ENCODE measurements at regions of chr2 and their contacts with region 1.

Region 1: GRCh38 chr2:72993147-72993932 is 76.0 kb downstream of the EMX1 start:
- DNase-seq: no peak
- ATAC-seq: peak in 3 of 8 donors; percentile 37 to 60 (median 45)
- H3K4me3 ChIP-seq: no peak overlapping the region
- H3K27ac ChIP-seq: no peak overlapping the region
- H3K4me1 ChIP-seq: peaks cover 0 to 14% (median 8%) of the 10 kb centered on the region in 9 donors
- H3K27me3 ChIP-seq: no peaks in the 10 kb centered on the region
- CTCF ChIP-seq: peak; percentile 63 to 89 (median 84)

Region 2: DNA sequence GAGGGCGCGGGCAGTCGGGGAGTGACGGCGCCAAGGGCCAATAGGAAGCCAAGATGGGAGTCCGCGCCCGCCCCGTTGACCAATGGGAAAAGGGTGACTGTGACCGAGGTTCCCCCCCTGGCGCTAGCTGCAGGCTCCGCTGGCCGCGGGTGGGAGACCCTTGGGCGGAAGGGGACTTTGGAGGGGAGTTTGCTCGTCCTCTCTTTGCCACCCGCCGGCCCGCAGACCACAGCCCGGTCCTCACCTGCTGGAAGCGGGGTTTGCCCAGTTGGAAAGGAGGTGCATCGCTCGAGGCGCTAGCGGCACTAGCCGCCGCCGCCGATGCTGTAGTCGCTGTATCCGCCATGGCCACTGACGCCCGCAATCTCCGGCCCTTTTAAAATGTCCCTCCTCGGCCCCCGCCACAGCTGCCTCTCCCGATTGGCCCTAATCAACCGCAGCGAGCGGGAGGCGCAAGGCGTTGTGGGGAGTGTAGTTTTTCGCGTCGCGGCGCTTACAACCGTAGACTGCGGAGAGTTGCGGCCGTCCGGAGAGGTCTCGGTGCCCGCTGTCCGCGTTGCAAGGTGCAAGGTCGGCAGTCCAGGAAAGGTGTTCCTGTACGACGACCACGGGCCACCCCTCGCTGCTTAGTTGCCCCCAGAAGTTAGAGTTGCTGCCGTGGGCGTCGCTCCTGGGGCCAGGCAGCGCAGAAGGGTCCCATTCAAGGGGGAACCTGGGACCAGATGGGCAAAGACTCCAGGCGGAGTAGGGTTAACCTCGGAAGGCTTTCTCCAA is 78.2 kb after region 1 on chr2 and contains the start of gene SFXN5:
- intact Hi-C with region 1: loop called in 2 of 10 experiments (anchors 5 kb)
- DNase-seq: peak; percentile 99
- ATAC-seq: peak; percentile 95 to 98 (median 97)
- H3K4me3 ChIP-seq: peak within 1 kb of the TSS; percentile 69 to 98 (median 94)
- H3K27ac ChIP-seq: peak within 1 kb of the TSS; percentile 79 to 99 (median 93)
- H3K4me1 ChIP-seq: peaks cover 10 to 44% (median 25%) of the 10 kb centered on the region in 9 donors
- H3K27me3 ChIP-seq: no peaks in the 10 kb centered on the region
- CTCF ChIP-seq: peak in 7 of 9 donors; percentile 12 to 58 (median 35)
- total RNA-seq, gene SFXN5: 7.3 to 11.8 (median 10.0) TPM

Region 3: GRCh38 chr2:73085691-73086360 is 92.5 kb after region 1 on chr2:
- intact Hi-C with region 1: loop called in 1 of 10 experiments (anchors 5 kb)
- DNase-seq: peak; percentile 81 to 84
- ATAC-seq: peak; percentile 57 to 84 (median 66)
- H3K4me3 ChIP-seq: no peak overlapping the region
- H3K27ac ChIP-seq: no peak overlapping the region
- H3K4me1 ChIP-seq: peaks cover 0 to 54% (median 20%) of the 10 kb centered on the region in 9 donors
- H3K27me3 ChIP-seq: no peaks in the 10 kb centered on the region
- CTCF ChIP-seq: peak; percentile 82 to 98 (median 94)

Region 4: GRCh38 chr2:73156539-73157124 is 163.3 kb after region 1 on chr2:
- intact Hi-C with region 1: loop called in 9 of 10 experiments (anchors 2 to 5 kb)
- DNase-seq: peak; percentile 52 to 66
- ATAC-seq: peak; percentile 83 to 94 (median 88)
- H3K4me3 ChIP-seq: peak overlapping the region in 1 of 10 donors; percentile 14
- H3K27ac ChIP-seq: no peak overlapping the region
- H3K4me1 ChIP-seq: peaks cover 0 to 8% (median 4%) of the 10 kb centered on the region in 9 donors
- H3K27me3 ChIP-seq: peaks cover 0 to 27% (median 17%) of the 10 kb centered on the region in 7 donors
- CTCF ChIP-seq: peak; percentile 62 to 88 (median 81)

Region 5: DNA sequence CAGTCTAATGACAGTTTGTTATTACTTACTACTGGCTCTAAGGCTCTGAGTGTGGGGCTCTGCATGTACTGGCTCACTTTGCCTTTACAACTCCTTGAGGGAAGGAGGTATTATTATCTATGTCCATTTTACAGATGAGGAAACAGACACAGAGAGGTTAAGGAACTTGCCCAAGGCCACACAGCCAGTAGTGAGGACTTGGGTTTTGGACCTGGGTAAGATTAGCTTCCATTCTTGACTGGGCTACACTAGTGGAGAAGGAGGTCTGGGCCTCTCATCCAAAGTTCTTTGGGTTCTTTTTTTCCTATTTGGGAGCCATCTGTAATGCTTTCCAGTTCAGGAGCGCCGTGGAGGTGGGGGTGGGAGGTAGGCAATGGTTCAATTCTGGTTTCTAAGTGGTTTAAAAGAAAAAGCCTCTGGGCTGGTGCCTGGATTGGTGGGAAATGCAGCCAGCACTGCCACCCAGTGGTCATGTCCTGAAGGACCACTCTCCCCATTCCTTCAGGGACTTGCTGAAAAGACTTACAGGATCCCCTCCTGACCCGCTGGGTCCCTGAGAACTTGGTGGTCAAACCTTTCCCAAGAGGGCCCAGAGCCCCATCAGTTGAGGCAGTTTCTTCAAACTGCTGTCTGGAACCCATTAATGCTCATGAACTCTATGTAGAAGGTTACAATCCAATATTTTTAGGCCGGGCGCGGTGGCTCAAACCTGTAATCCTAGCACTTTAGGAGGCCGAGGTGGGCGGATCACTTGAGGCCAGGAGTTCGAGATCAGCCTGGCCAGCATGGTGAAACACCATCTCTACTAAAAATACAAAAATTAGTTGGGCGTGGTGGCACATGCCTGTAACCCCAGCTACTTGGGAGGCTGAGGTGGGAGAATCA is 170.4 kb after region 1 on chr2:
- intact Hi-C with region 1: loop called in 9 of 10 experiments (anchors 1 to 5 kb)
- DNase-seq: peak; percentile 60 to 66
- ATAC-seq: peak; percentile 58 to 90 (median 83)
- H3K4me3 ChIP-seq: no peak overlapping the region
- H3K27ac ChIP-seq: no peak overlapping the region
- H3K4me1 ChIP-seq: no peaks in the 10 kb centered on the region
- H3K27me3 ChIP-seq: peaks cover 0 to 4% (median 0%) of the 10 kb centered on the region in 7 donors
- CTCF ChIP-seq: peak; percentile 75 to 93 (median 87)

Region 6: GRCh38 chr2:73176881-73177644 is 183.7 kb after region 1 on chr2:
- intact Hi-C with region 1: loop called in 5 of 10 experiments (anchors 1 to 5 kb)
- DNase-seq: peak; percentile 92
- ATAC-seq: peak; percentile 92 to 96 (median 94)
- H3K4me3 ChIP-seq: peak overlapping the region; percentile 26 to 75 (median 60)
- H3K27ac ChIP-seq: peak overlapping the region in 9 of 10 donors; percentile 71 to 89 (median 80)
- H3K4me1 ChIP-seq: peaks cover 4 to 31% (median 25%) of the 10 kb centered on the region in 9 donors
- H3K27me3 ChIP-seq: peaks cover 0 to 61% (median 27%) of the 10 kb centered on the region in 7 donors
- CTCF ChIP-seq: peak; percentile 97 to 99 (median 98)

Measured in heart right ventricle (tissue), 16 donors.